ENCODE measurements at regions of chr20 and their contacts with region 1.

Region 1: GRCh38 chr20:62921119-62921687 is 5.1 kb downstream of the DIDO1 start:
- DNase-seq: peak; percentile 89
- ATAC-seq: peak; percentile 70
- H3K4me3 Mint-ChIP-seq: peak overlapping the region; percentile 15
- H3K27ac Mint-ChIP-seq: peak overlapping the region; percentile 90
- H3K4me1 Mint-ChIP-seq: peaks cover 74% of the 10 kb centered on the region
- H3K27me3 Mint-ChIP-seq: no peaks in the 10 kb centered on the region
- CTCF ChIP-seq: peak; percentile 71

Region 2: DNA sequence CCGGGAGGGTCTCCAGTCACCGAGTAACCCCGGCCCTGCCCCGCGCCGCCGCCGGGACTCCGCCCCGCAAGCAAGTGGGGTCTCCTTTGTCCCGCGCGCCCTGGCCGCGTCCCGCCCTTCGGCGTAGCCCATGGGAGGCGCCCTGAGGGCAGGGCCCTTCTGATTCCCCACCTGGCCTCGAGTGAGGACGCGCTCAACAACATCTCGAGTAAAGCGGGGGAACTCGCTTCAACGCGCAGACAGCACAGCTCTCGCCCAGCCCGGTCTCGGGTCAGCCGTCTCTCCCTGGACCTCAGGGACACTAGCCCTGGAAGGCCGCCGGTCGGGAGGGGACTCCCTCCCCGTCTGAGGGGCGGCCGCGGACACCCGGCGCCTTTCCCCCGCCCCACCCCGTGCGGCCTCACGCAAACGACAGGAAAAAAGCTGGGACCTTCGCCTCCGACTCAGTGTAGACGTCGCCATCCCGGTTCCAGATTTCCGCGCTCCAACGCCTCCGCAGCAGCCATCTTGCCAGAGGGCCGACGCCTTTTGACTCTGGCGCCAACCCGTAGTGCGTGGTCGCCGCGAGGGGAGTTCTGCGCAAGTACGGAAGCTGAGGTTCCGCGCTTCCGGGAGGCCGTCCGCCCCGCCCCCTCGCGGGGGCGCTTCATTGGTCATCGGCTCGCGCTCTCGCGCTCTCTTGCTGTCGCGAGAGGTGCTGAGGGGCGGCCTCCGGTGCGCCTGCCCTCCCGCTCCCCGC is 16.3 kb after region 1 on chr20:
- CTCF ChIA-PET with region 1: interaction called, 47 read pairs
- POLR2A ChIA-PET with region 1: interaction called, 243 read pairs
- intact Hi-C with region 1: no loop called
- DNase-seq: peak; percentile 98
- ATAC-seq: peak; percentile 93
- H3K4me3 Mint-ChIP-seq: no peak overlapping the region
- H3K27ac Mint-ChIP-seq: peak overlapping the region; percentile 98
- H3K4me1 Mint-ChIP-seq: peaks cover 31% of the 10 kb centered on the region
- H3K27me3 Mint-ChIP-seq: no peaks in the 10 kb centered on the region
- CTCF ChIP-seq: no peak